ENCODE measurements at regions of chr17 and their contacts with region 1.

Region 1: DNA sequence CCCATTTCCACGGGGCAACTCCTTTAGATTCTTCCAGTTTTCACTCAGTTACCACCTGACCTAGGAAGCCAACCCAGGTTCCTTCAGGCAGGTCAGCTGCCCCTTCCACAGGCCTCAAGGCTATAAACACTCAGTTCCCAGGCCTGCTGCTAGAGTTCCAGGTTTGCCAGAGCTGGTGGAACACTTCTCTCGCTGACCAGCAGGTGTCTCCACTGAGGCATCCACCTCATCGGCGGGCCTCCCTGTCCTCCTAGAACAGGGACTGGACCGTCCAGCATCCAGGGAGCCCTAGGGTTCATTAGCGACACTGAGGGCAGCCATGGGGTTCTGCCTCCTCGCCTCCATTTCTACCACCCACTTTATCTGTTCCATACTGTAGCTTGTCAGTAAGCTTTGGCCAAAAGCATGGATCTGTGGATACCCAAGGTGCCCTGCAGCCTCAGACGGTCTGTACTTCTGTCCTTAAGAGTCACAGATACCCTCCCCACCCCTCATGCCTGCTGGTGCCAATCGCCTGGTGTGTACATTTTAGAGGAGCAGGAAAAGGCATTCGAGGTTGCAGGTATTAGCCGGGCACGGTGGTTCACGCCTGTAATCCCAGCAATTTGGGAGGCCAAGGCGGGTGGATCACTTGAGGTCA is 29.0 kb downstream of the PIMREG start:
- DNase-seq: peak; percentile 65 to 68
- ATAC-seq: peak; percentile 53 to 81 (median 74)
- H3K4me3 ChIP-seq: no peak overlapping the region
- H3K27ac ChIP-seq: no peak overlapping the region
- H3K4me1 ChIP-seq: no peaks in the 10 kb centered on the region
- H3K27me3 ChIP-seq: no peaks in the 10 kb centered on the region
- CTCF ChIP-seq: peak; percentile 82 to 97 (median 94)

Region 2: DNA sequence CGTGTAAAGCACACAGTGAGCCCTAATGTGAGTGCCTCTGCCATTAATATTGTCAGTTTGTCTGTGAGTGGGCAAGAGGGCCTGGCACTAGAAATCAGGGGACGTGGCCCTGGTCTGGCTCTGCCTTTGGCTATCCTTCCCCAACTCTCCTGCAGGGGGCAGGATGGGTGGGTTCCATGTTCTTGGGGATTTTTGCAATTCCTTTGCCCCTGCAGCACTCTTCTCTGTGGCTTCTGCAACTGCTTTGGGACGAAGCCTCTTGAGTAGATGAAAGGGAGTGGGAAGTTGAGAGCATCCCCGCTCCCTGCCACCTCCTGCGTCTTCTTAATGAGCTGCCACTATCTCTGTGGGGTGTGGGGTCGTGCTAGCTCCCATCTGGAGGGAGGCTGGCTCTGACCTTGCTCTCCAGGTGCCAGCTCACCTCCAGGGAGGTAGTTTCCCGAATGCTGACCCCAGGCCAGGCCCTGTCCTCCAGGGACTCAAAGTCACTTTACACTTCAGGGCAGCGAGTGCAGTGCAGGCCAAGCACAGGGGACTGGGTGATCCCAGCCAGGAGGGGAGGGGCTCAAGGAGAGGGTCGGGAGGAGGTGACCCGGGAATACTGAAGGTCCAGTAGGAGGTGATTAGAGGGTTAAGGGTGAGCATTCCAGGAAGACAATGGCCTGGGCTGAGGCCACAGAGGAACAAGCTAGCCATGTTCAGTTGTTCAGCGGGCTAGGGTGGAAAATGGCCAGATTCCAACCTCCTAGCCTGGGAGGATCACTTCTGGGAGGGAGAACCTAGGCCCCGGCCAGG is 768.0 kb before region 1 on chr17:
- intact Hi-C with region 1: no loop called
- DNase-seq: no peak
- ATAC-seq: no peak
- H3K4me3 ChIP-seq: no peak overlapping the region
- H3K27ac ChIP-seq: no peak overlapping the region
- H3K4me1 ChIP-seq: no peaks in the 10 kb centered on the region
- H3K27me3 ChIP-seq: peaks cover 0 to 51% (median 10%) of the 10 kb centered on the region in 7 donors
- CTCF ChIP-seq: peak in 6 of 9 donors; percentile 6 to 36 (median 20)

Region 3: DNA sequence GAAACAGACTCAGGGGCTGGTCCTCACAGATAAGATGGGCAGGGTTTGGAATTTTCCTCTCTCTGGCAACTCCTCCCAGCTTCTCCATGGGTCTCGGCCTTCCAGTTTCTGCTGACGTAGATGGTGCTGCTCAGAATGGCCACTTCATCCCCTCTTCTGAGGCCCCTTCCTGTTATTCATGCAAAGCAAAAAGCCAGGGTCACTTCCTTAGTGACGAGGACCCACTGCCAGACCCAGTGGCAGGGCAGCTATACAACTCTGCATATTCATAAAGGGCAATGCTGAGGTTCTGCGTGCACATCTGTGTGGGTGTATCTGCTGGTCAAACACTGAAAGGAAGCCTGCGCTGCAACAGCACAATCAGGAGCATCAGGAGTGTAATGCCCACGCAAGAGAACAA is 294.2 kb before region 1 on chr17:
- intact Hi-C with region 1: no loop called
- DNase-seq: no peak
- ATAC-seq: peak in 2 of 8 donors; percentile 35 to 44
- H3K4me3 ChIP-seq: no peak overlapping the region
- H3K27ac ChIP-seq: no peak overlapping the region
- H3K4me1 ChIP-seq: peaks cover 0 to 3% (median 0%) of the 10 kb centered on the region in 9 donors
- H3K27me3 ChIP-seq: peaks cover 0 to 8% (median 0%) of the 10 kb centered on the region in 7 donors
- CTCF ChIP-seq: no peak

Region 4: DNA sequence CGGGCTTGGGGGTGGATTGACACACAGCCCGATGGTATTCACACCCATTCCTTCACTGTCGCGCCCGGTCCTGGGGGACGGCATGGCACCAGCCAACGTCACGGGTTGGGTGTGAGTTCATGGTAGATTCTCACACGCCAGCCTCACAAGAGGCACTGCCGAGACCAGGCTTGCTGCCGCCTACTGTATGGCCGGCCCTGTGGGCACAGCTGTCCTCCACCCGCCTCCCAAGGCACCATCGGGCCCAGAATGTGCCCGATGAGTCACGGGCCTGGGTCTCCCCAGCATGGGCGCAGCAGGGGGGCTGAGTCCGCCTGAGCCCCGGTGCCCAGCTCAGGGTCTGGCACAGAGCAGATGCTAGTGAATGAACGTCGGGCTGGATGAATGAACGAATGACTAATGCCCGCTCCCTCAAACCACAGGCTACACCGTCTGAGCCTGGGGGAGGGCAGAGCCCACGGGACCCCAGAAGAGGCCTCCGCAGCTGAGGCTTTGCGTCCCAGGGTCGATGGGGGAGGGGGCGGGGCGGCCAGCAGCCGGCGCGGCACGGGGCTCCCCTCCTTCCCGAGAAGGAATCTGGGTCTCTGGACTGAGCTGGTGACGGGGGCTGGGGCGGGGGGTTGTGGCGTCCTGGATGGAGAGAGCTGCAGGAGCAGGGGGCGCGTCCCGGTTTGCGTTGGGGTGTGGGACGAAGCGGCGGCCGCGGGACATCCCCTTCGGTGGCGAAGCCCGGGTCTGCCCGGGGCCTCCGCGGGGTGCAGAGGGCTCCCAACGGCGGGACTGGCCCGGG is 82.3 kb after region 1 on chr17:
- intact Hi-C with region 1: loop called in 2 of 10 experiments (anchors 5 kb)
- DNase-seq: no peak
- ATAC-seq: peak in 7 of 8 donors; percentile 9 to 51 (median 41)
- H3K4me3 ChIP-seq: peak overlapping the region in 9 of 10 donors; percentile 39 to 61 (median 53)
- H3K27ac ChIP-seq: no peak overlapping the region
- H3K4me1 ChIP-seq: peaks cover 7 to 32% (median 13%) of the 10 kb centered on the region in 9 donors
- H3K27me3 ChIP-seq: peaks cover 12 to 47% (median 33%) of the 10 kb centered on the region in 7 donors
- CTCF ChIP-seq: no peak

Region 5: GRCh38 chr17:6574687-6575595 is 101.7 kb after region 1 on chr17:
- intact Hi-C with region 1: loop called in 1 of 10 experiments (anchors 10 kb)
- DNase-seq: peak; percentile 28 to 49
- ATAC-seq: peak; percentile 65 to 91 (median 81)
- H3K4me3 ChIP-seq: peak overlapping the region in 1 of 10 donors; percentile 11
- H3K27ac ChIP-seq: peak overlapping the region in 5 of 10 donors; percentile 13 to 67 (median 29)
- H3K4me1 ChIP-seq: peaks cover 3 to 21% (median 15%) of the 10 kb centered on the region in 9 donors
- H3K27me3 ChIP-seq: peaks cover 0 to 3% (median 0%) of the 10 kb centered on the region in 7 donors
- CTCF ChIP-seq: peak in 2 of 9 donors; percentile 9 to 31

Region 6: DNA sequence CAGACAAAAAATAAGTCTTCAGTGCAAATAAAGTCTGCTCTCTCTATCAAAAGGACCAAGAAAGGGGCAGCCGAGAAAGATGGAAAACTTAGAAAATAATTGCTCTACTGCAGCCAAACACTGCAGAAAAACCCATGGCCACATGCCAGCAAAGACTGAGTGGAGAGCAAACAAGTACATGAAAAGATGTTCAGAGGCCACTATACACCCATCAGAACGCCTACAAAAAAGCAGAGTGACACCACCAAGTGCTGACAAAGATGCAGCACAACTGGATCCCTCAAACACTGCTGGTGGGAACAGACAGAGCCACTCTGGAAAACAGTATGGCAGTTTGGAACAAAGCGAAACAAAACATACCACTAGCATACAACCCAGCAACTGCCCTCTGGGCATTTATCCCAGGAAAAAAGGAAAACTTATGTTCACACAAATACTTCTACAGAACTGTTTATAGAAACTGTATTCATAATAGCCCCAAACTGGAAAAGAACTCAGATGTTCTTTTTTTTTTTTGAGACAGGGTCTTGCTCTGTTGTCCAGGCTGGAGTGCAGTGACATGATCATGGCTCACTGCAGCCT is 130.6 kb after region 1 on chr17:
- intact Hi-C with region 1: loop called in 1 of 10 experiments (anchors 10 kb)
- DNase-seq: peak in 1 of 2 donors; percentile 19
- ATAC-seq: no peak
- H3K4me3 ChIP-seq: no peak overlapping the region
- H3K27ac ChIP-seq: no peak overlapping the region
- H3K4me1 ChIP-seq: peaks cover 0 to 16% (median 0%) of the 10 kb centered on the region in 9 donors
- H3K27me3 ChIP-seq: no peaks in the 10 kb centered on the region
- CTCF ChIP-seq: no peak

Region 7: GRCh38 chr17:6627019-6627418 is 153.8 kb after region 1 on chr17:
- intact Hi-C with region 1: loop called in 1 of 10 experiments (anchors 10 kb)
- DNase-seq: no peak
- ATAC-seq: no peak
- H3K4me3 ChIP-seq: no peak overlapping the region
- H3K27ac ChIP-seq: no peak overlapping the region
- H3K4me1 ChIP-seq: peaks cover 0 to 3% (median 0%) of the 10 kb centered on the region in 9 donors
- H3K27me3 ChIP-seq: no peaks in the 10 kb centered on the region
- CTCF ChIP-seq: no peak

Region 8: GRCh38 chr17:6640536-6641373 is 167.5 kb after region 1 on chr17 and contains the starts of genes KIAA0753 and TXNDC17:
- intact Hi-C with region 1: loop called in 2 of 10 experiments (anchors 10 kb)
- DNase-seq: peak; percentile 93 to 94
- ATAC-seq: peak; percentile 96 to 99 (median 98)
- H3K4me3 ChIP-seq: peak within 1 kb of the TSS; percentile 75 to 98 (median 86)
- H3K27ac ChIP-seq: peak within 1 kb of the TSS; percentile 74 to 95 (median 88)
- H3K4me1 ChIP-seq: peaks cover 6 to 32% (median 28%) of the 10 kb centered on the region in 9 donors
- H3K27me3 ChIP-seq: no peaks in the 10 kb centered on the region
- CTCF ChIP-seq: no peak
- total RNA-seq, gene KIAA0753: 3.6 to 9.9 (median 6.0) TPM
- total RNA-seq, gene TXNDC17: 33.3 to 59.2 (median 43.5) TPM

Measured in heart right ventricle (tissue), 16 donors.